ENCODE measurements at regions of chr11 and their contacts with region 1.

Region 1: DNA sequence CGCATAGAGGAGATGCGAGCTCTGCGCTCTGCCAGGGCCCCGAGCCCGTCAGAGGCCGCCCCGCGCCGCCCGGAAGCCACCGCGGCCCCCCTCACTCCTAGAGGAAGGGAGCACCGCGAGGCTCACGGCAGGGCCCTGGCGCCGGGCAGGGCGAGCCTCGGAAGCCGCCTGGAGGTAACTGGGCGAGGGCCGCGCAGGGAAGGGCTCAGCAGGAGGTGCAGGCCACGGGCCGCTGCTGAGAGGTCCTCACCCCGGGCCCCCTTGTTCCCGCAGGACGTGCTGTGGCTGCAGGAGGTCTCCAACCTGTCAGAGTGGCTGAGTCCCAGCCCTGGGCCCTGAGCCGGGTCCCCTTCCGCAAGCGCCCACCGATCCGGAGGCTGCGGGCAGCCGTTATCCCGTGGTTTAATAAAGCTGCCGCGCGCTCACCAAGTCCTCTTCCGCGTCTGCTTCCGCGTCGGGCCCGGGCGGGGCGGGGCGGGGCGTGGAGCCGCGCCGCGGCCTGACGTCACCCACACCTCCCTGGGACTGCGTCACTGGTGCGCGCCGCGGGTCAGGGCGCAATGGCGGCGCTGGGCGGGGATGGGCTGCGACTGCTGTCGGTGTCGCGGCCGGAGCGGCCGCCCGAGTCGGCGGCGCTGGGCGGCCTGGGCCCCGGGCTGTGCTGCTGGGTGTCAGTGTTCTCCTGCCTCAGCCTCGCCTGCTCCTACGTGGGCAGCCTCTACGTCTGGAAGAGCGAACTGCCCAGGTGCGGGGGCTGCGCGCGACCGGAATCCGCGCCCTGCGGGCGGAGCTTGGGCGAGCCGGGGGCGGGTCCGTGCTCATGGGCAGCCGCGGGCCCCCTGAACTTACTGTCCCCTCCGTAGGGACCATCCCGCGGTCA is at the start of gene RCE1:
- DNase-seq: peak; percentile 88
- H3K4me3 ChIP-seq: peak within 1 kb of the TSS; percentile 64 to 96 (median 87)
- H3K27ac ChIP-seq: peak within 1 kb of the TSS; percentile 83
- H3K4me1 ChIP-seq: peaks cover 22% of the 10 kb centered on the region
- H3K27me3 ChIP-seq: no peaks in the 10 kb centered on the region
- CTCF ChIP-seq: no peak
- total RNA-seq, gene RCE1: 19.0 to 21.0 TPM

Region 2: DNA sequence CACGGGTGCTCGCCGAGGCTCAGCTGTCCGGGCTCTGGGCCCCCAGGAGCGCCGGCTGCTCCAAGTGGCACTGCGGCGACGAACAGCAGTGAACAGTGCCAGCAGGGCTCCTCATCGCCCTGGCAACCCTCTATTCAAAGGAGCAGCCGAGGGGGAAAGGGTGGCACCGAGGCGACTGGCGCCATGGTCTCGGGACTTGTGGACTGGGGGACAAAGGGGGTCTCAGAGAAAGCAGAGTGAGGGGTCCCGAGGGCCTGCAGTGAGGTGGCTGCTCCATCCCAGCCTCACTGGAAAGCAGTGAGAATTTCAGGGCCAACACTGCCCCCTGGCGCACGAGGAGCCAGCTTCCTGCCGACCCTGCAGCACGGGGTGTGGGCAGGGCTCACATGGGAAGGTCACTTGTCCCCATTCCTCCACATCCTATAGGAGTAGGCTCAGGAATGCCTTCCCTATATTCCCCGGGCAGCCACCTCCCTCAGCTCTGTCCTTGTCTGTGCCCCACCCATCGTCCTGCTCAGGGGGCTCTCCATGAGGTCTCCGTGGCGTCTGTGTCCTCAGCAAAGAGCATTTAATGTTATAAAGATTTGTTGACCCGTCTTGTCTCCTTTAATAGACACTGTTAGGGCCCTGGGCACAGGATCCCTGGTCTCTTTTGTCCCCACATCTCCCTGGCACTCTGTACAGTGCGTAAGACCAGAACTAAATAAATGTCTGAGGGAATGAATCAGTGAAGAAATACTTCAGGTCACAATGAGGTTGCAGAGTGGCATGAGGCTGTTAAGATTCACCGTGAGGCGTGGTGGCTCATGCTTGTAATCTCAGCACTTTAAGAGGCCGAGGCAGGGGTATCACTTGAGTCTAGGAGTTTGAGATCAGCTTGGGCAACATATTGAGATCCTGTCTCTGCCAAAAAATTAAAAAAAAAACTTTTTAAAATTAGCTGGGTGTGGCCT is 40.2 kb after region 1 on chr11:
- CTCF ChIA-PET with region 1: interaction called, 4 read pairs
- dilution Hi-C with region 1: no loop called
- in situ Hi-C with region 1: no loop called
- intact Hi-C with region 1: loop called (anchors 1 kb)
- DNase-seq: peak; percentile 60
- H3K4me3 ChIP-seq: no peak overlapping the region
- H3K27ac ChIP-seq: no peak overlapping the region
- H3K4me1 ChIP-seq: peaks cover 38% of the 10 kb centered on the region
- H3K27me3 ChIP-seq: no peaks in the 10 kb centered on the region
- CTCF ChIP-seq: peak; percentile 62 to 76

Region 3: GRCh38 chr11:66891851-66892660 is 48.9 kb after region 1 on chr11:
- CTCF ChIA-PET with region 1: no interaction called
- dilution Hi-C with region 1: no loop called
- in situ Hi-C with region 1: no loop called
- intact Hi-C with region 1: loop called (anchors 2 kb)
- DNase-seq: peak; percentile 98
- H3K4me3 ChIP-seq: no peak overlapping the region
- H3K27ac ChIP-seq: peak overlapping the region; percentile 9
- H3K4me1 ChIP-seq: peaks cover 18% of the 10 kb centered on the region
- H3K27me3 ChIP-seq: no peaks in the 10 kb centered on the region
- CTCF ChIP-seq: peak in 1 of 2 donors; percentile 10

Region 4: GRCh38 chr11:66958232-66958955 is 115.3 kb after region 1 on chr11 and contains the start of gene PC:
- CTCF ChIA-PET with region 1: no interaction called
- dilution Hi-C with region 1: no loop called
- in situ Hi-C with region 1: no loop called
- intact Hi-C with region 1: loop called (anchors 5 kb)
- DNase-seq: peak; percentile 100
- H3K4me3 ChIP-seq: peak within 1 kb of the TSS; percentile 59 to 84 (median 68)
- H3K27ac ChIP-seq: peak within 1 kb of the TSS; percentile 29
- H3K4me1 ChIP-seq: peaks cover 24% of the 10 kb centered on the region
- H3K27me3 ChIP-seq: no peaks in the 10 kb centered on the region
- CTCF ChIP-seq: no peak
- total RNA-seq, gene PC: 52.0 to 67.0 TPM

Region 5: DNA sequence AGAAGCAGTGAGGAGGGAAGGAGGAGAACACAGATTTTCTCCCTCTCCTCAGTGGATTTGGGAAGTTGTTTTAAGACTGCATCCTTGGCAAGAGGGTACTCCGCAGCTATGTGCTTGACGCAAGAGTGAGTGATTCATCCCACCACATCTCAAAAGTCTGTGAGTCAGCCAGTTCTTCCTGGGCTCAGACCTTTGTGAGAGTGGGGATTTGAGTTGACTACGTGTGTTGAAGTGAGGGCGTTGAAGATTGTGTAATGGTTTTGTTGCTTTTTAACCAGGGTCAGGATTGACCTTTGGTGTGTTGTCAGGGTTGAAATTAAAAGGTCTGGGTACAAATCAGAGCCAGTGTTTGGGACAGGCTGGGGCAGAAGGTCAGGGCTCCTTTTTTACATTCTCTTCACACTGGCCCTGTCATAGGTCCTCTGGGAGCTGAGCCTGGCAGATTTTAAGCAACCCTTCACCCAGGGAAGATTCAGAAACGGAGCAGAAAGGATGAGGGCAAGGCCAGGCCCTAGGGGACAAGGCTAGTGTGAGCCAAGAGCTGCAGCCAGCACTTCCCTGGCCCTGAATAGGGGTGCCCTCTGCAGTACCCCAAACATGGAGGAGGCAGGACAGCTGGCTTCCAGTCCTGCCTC is 127.8 kb after region 1 on chr11:
- CTCF ChIA-PET with region 1: no interaction called
- dilution Hi-C with region 1: no loop called
- in situ Hi-C with region 1: no loop called
- intact Hi-C with region 1: loop called (anchors 2 kb)
- DNase-seq: peak; percentile 99
- H3K4me3 ChIP-seq: no peak overlapping the region
- H3K27ac ChIP-seq: peak overlapping the region; percentile 96
- H3K4me1 ChIP-seq: peaks cover 51% of the 10 kb centered on the region
- H3K27me3 ChIP-seq: no peaks in the 10 kb centered on the region
- CTCF ChIP-seq: no peak

Region 6: GRCh38 chr11:67022328-67022927 is 179.3 kb after region 1 on chr11:
- CTCF ChIA-PET with region 1: no interaction called
- dilution Hi-C with region 1: loop called (anchors 5 kb)
- in situ Hi-C with region 1: no loop called
- intact Hi-C with region 1: loop called (anchors 5 kb)
- DNase-seq: peak; percentile 79
- H3K4me3 ChIP-seq: peak overlapping the region in 1 of 3 experiments; percentile 44
- H3K27ac ChIP-seq: peak overlapping the region; percentile 37
- H3K4me1 ChIP-seq: peaks cover 41% of the 10 kb centered on the region
- H3K27me3 ChIP-seq: no peaks in the 10 kb centered on the region
- CTCF ChIP-seq: no peak

Region 7: GRCh38 chr11:67027483-67028196 is 184.5 kb after region 1 on chr11:
- CTCF ChIA-PET with region 1: no interaction called
- dilution Hi-C with region 1: loop called (anchors 5 kb)
- in situ Hi-C with region 1: no loop called
- intact Hi-C with region 1: loop called (anchors 5 kb)
- DNase-seq: peak; percentile 70
- H3K4me3 ChIP-seq: no peak overlapping the region
- H3K27ac ChIP-seq: peak overlapping the region; percentile 7
- H3K4me1 ChIP-seq: peaks cover 55% of the 10 kb centered on the region
- H3K27me3 ChIP-seq: no peaks in the 10 kb centered on the region
- CTCF ChIP-seq: no peak

Measured in mammary epithelial cell (primary cell).